Activated CD8-positive, alpha-beta T cell treated with anti-CD3 and anti-CD28 coated beads, Interleukin-2, amount 10 ng/mL, durations not matched to agents 7 days and 5 days (primary cell): ENCODE measurements at regions of chr7 and their contacts with region 1.

Region 1: GRCh38 chr7:30276203-30276900 is 8.0 kb upstream of the ZNRF2 start:
- DNase-seq: peak; percentile 65
- ATAC-seq: peak; percentile 73
- H3K4me3 Mint-ChIP-seq: no peak overlapping the region
- H3K27ac Mint-ChIP-seq: no peak overlapping the region
- H3K4me1 Mint-ChIP-seq: peaks cover 6% of the 10 kb centered on the region
- H3K27me3 Mint-ChIP-seq: no peaks in the 10 kb centered on the region

Region 2: GRCh38 chr7:30164567-30164966 is 111.8 kb before region 1 on chr7:
- CTCF ChIA-PET with region 1: interaction called, 35 read pairs
- POLR2A ChIA-PET with region 1: no interaction called
- DNase-seq: no peak
- ATAC-seq: no peak
- H3K4me3 Mint-ChIP-seq: no peak overlapping the region
- H3K27ac Mint-ChIP-seq: peak overlapping the region; percentile 12
- H3K4me1 Mint-ChIP-seq: peaks cover 43% of the 10 kb centered on the region
- H3K27me3 Mint-ChIP-seq: no peaks in the 10 kb centered on the region

Region 3: DNA sequence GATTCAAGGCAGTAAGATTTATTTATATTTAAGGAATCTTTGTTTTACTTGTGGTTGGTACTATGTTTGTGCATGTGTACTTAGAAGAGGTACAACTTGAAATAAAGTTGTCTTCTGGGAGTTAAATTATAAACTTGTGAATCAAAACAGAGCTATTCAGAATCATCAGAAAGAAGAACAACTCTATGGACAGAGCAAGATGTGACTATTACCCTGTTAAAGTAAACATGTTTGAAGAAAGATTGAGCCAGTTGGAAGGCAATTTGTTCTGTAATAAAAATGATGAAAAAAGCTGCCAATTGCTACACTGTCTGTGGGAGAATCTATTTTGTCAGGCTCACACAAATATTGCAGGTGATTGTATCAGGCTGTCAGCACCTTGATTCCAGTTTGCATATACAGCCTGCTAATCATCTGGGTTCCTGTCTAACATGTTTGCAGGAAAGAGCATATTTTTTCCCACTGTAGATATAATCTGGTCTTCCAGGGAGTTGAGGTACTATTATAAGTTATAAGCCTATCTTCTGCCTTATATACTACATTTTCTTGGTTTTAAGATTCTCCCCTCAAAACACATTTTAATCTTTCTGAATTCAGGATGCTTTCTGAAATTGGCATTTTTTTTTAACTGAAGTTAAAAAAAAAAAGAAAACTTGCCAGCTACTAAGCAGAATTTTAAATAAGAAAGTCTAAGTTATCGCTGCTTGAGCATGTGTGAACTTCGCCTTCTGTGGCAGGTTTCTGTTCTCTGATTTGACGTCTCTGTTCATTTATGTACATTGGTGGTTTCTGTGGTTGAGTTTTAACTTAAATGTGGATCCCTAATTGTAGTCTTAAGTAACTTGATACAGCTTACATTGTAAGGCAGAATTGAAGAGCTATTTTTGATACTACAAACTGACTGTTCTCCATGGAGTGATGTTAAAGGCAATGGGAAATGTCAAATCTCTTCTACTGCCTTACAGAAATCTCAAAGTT is 54.1 kb after region 1 on chr7:
- CTCF ChIA-PET with region 1: interaction called, 12 read pairs
- POLR2A ChIA-PET with region 1: interaction called, 4 read pairs
- DNase-seq: peak; percentile 54
- ATAC-seq: peak; percentile 90
- H3K4me3 Mint-ChIP-seq: peak overlapping the region; percentile 63
- H3K27ac Mint-ChIP-seq: peak overlapping the region; percentile 82
- H3K4me1 Mint-ChIP-seq: peaks cover 42% of the 10 kb centered on the region
- H3K27me3 Mint-ChIP-seq: no peaks in the 10 kb centered on the region

Region 4: GRCh38 chr7:30548762-30549344 is 272.5 kb after region 1 on chr7:
- CTCF ChIA-PET with region 1: interaction called, 13 read pairs
- POLR2A ChIA-PET with region 1: no interaction called
- DNase-seq: peak; percentile 47
- ATAC-seq: peak; percentile 42
- H3K4me3 Mint-ChIP-seq: no peak overlapping the region
- H3K27ac Mint-ChIP-seq: no peak overlapping the region
- H3K4me1 Mint-ChIP-seq: no peaks in the 10 kb centered on the region
- H3K27me3 Mint-ChIP-seq: no peaks in the 10 kb centered on the region